ENCODE measurements at regions of chr6 and their contacts with region 1.

Region 1: DNA sequence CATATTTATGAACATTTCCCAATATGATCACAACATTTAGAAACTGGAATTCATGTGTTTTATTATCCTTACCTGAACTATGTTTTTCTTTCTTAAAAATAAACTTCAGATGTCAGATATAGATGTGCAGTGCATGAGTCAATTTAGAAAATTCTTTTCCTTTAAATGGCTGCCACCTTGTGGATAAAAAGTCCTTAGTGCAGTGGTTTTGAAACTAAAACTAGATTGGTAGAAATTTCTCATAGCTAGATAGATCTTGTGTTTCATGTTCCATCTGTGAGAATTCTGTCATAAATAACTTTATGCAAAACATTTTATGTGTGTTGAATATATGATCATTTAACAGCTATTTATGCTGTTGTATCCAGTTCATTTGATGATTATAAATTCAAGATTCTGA is 134.9 kb downstream of the KLHL32 start:
- DNase-seq: no peak
- H3K4me3 ChIP-seq: no peak overlapping the region
- CTCF ChIP-seq: peak; percentile 17

Region 2: DNA sequence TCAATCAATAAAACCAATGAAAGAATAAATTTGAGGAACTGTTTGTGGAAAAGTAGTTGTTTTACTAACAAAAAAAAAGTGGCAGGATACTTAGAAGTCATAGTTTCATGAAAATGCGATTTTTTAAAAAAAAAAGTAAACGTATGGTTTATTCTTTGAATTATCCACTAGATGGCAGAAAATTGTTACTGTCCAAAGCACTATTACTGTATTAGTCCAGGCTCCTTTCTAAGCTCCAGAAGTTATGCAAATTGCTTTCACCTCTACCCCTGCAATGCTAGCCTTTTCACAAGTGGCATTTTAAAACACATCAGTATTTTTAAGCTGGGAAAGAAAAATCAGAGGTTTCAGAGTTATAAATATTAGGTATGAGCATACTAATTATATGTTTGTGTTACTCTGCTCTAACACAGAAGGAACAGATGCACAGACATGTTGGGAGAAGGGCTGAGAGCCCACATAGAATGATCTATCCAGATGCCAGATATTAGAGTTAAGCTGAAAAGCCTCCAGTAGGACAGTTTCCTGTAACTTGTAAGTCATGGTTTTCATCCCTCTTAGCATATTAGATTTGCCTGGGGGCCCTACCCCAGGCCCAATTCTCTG is 432.6 kb before region 1 on chr6:
- CTCF ChIA-PET with region 1: interaction called, 33 read pairs
- POLR2A ChIA-PET with region 1: no interaction called
- DNase-seq: no peak
- H3K4me3 ChIP-seq: no peak overlapping the region
- CTCF ChIP-seq: no peak

Measured in AG04449 (cell line).